ENCODE measurements at regions of chr2 and their contacts with region 1.

Region 1: GRCh38 chr2:135836596-135837270 is at the start of gene LCT:
- DNase-seq: no peak
- ATAC-seq: no peak
- H3K4me3 ChIP-seq: no peak within 1 kb of the TSS
- H3K27ac ChIP-seq: no peak within 1 kb of the TSS
- H3K4me1 ChIP-seq: peaks cover 0 to 26% (median 15%) of the 10 kb centered on the region in 12 donors
- H3K27me3 ChIP-seq: no peaks in the 10 kb centered on the region
- CTCF ChIP-seq: no peak
- POLR2A ChIP-seq: no peak
- total RNA-seq, gene LCT: 0.06 TPM in 1 of 9 donors, not detected in the others

Region 2: GRCh38 chr2:135647836-135648559 is 188.7 kb before region 1 on chr2:
- intact Hi-C with region 1: no loop called
- DNase-seq: no peak
- ATAC-seq: no peak
- H3K4me3 ChIP-seq: no peak overlapping the region
- H3K27ac ChIP-seq: no peak overlapping the region
- H3K4me1 ChIP-seq: no peaks in the 10 kb centered on the region
- H3K27me3 ChIP-seq: no peaks in the 10 kb centered on the region
- CTCF ChIP-seq: no peak
- POLR2A ChIP-seq: no peak

Region 3: DNA sequence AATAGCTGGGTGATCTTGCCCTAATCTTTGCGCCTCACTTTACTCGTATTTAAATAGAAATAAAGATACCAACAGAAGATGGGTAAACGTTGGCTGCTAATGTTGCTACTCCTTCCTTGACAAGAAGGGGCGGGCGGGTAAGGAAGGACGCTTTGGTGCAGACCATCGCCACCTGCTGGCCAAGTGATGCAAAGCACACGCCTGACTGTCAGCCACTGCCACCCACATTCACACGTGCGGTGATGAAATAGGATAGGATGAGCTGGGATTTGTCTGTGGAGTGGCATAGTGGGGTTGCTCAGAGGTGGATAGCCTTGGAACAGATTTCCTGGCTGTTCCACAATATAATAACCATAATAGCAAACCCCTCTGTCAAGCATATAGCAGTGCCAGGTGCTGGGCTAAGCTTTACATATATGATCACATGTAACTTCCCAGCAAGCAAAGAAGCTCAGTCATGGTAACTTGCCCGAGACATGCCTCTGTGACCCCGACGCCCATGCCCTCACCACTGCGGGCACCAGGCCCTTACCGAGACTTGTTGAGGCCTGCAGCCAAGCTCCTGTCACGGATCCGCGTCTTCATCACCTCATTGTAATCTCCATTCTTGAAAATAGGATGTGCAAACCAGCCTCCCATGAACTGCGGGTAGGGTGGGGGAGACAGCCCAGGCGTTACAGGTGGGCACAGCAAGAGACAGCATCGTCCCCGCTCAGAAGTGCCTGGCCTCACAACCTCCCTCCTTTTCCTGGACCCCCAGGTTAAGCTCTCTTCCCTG is 39.0 kb before region 1 on chr2:
- intact Hi-C with region 1: loop called in 1 of 10 experiments (anchors 2 kb)
- DNase-seq: peak; percentile 63 to 78 (median 74)
- ATAC-seq: peak; percentile 48 to 85 (median 82)
- H3K4me3 ChIP-seq: no peak overlapping the region
- H3K27ac ChIP-seq: peak overlapping the region in 1 of 12 donors; percentile 25
- H3K4me1 ChIP-seq: peaks cover 0 to 11% (median 0%) of the 10 kb centered on the region in 12 donors
- H3K27me3 ChIP-seq: no peaks in the 10 kb centered on the region
- CTCF ChIP-seq: peak; percentile 70 to 93 (median 88)
- POLR2A ChIP-seq: no peak

Measured in heart left ventricle (tissue), 16 donors.